Mammary epithelial cell (primary cell): ENCODE measurements at regions of chr14 and their contacts with region 1.

Region 1: GRCh38 chr14:48553443-48553842 is 878.0 kb upstream of the MDGA2 start:
- DNase-seq: no peak
- H3K4me3 ChIP-seq: no peak overlapping the region
- H3K27ac ChIP-seq: no peak overlapping the region
- H3K4me1 ChIP-seq: no peaks in the 10 kb centered on the region
- H3K27me3 ChIP-seq: no peaks in the 10 kb centered on the region
- CTCF ChIP-seq: no peak

Region 2: DNA sequence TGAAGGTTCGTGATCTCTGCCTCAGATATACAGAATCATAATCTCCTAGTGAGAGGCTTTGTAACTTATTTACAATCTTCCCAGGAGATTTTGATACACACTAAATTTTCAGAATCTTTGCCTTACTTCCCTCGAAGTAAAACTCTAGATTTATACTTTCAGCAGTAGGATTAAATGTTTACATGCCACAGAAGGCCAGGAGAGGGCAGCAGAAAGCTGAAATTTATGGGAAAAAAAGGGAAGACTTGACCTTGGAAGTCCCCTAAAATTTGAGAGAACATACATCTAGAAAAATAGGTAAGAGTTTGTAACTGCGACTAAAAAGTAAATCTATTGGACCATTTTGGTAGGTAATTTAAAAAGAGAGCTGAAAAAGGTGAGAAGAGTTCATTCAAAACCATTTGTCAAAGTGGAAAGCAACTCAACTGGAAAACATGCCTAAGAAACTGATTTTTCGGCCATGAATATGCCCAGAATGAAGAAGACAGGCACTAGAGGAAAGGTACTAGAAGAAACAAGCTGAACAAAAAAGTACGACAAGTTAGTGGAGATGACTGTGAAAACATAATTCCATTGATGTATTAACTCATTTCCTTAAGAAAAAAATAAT is 636.0 kb before region 1 on chr14:
- CTCF ChIA-PET with region 1: no interaction called
- dilution Hi-C with region 1: no loop called
- in situ Hi-C with region 1: no loop called
- intact Hi-C with region 1: no loop called
- DNase-seq: peak; percentile 1
- H3K4me3 ChIP-seq: no peak overlapping the region
- H3K27ac ChIP-seq: no peak overlapping the region
- H3K4me1 ChIP-seq: no peaks in the 10 kb centered on the region
- H3K27me3 ChIP-seq: no peaks in the 10 kb centered on the region
- CTCF ChIP-seq: peak in 1 of 2 donors; percentile 41

Region 3: DNA sequence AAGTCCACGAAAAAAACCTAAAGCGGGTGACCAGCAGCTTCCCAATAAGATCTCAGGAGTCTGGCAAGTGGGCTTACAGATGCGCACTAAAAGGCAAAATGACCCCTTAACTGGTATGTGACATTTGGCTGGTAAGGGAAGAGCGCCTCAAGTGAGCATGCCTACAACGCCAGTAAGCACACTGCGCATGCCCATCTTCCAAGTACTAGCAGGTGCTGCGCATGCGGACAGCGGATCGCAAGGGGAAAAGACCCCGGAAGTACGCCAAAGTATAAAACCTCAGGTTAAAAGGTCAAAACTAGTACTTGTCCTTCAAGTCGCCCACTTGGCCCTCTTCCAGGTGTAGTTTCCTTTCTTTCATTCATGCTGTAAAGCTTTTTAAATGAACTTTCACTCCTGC is 359.6 kb before region 1 on chr14:
- CTCF ChIA-PET with region 1: no interaction called
- dilution Hi-C with region 1: no loop called
- in situ Hi-C with region 1: no loop called
- intact Hi-C with region 1: no loop called
- DNase-seq: no peak
- H3K4me3 ChIP-seq: no peak overlapping the region
- H3K27ac ChIP-seq: no peak overlapping the region
- H3K4me1 ChIP-seq: no peaks in the 10 kb centered on the region
- H3K27me3 ChIP-seq: no peaks in the 10 kb centered on the region
- CTCF ChIP-seq: no peak

Region 4: GRCh38 chr14:48261436-48261835 is 292.0 kb before region 1 on chr14:
- CTCF ChIA-PET with region 1: no interaction called
- dilution Hi-C with region 1: no loop called
- in situ Hi-C with region 1: no loop called
- intact Hi-C with region 1: no loop called
- DNase-seq: no peak
- H3K4me3 ChIP-seq: no peak overlapping the region
- H3K27ac ChIP-seq: no peak overlapping the region
- H3K4me1 ChIP-seq: no peaks in the 10 kb centered on the region
- H3K27me3 ChIP-seq: no peaks in the 10 kb centered on the region
- CTCF ChIP-seq: no peak

Region 5: GRCh38 chr14:48456051-48456450 is 97.4 kb before region 1 on chr14:
- CTCF ChIA-PET with region 1: no interaction called
- dilution Hi-C with region 1: loop called (anchors 5 kb)
- in situ Hi-C with region 1: no loop called
- intact Hi-C with region 1: no loop called
- DNase-seq: no peak
- H3K4me3 ChIP-seq: no peak overlapping the region
- H3K27ac ChIP-seq: no peak overlapping the region
- H3K4me1 ChIP-seq: no peaks in the 10 kb centered on the region
- H3K27me3 ChIP-seq: no peaks in the 10 kb centered on the region
- CTCF ChIP-seq: no peak